CD8-positive, alpha-beta memory T cell (primary cell): ENCODE measurements at regions of chr5 and their contacts with region 1.

Region 1: GRCh38 chr5:14727428-14727865 is 62.9 kb downstream of the OTULIN start:
- DNase-seq: peak; percentile 59 to 77 (median 65)
- H3K4me3 ChIP-seq: no peak overlapping the region
- H3K4me3 Mint-ChIP-seq: no peak overlapping the region
- H3K27ac ChIP-seq: no peak overlapping the region
- H3K27ac Mint-ChIP-seq: peak overlapping the region in 4 of 8 donors; percentile 11 to 77 (median 67)
- H3K4me1 ChIP-seq: no peaks in the 10 kb centered on the region
- H3K4me1 Mint-ChIP-seq: peaks cover 5 to 19% (median 5%) of the 10 kb centered on the region in 3 donors
- H3K27me3 ChIP-seq: no peaks in the 10 kb centered on the region
- H3K27me3 Mint-ChIP-seq: no peaks in the 10 kb centered on the region

Region 2: DNA sequence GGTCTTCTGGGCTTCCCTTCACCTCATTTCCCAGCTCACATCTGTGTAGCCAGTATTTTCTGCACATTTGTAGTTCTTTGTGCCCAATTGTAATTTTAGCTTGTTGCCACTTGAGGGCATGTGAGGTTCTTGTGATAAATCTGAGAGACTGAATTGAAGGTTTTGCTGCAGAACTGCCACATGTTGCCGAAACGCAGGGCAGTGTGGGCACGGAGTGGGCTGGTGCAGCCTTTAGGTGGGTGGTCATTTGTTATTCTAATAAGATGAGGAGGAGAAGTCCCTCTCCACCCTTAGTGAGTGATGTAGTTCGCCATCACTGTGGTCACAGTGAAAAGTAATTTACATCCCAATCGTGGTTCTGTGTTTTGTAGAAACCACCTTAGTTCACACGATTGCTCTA is 41.7 kb before region 1 on chr5:
- CTCF ChIA-PET with region 1: interaction called, 21 read pairs
- POLR2A ChIA-PET with region 1: no interaction called
- DNase-seq: peak in 2 of 5 donors; percentile 35 to 59
- H3K4me3 ChIP-seq: no peak overlapping the region
- H3K4me3 Mint-ChIP-seq: peak overlapping the region in 6 of 7 donors; percentile 43 to 71 (median 61)
- H3K27ac ChIP-seq: no peak overlapping the region
- H3K27ac Mint-ChIP-seq: peak overlapping the region; percentile 26 to 89 (median 58)
- H3K4me1 ChIP-seq: peaks cover 8% of the 10 kb centered on the region
- H3K4me1 Mint-ChIP-seq: peaks cover 13 to 33% (median 19%) of the 10 kb centered on the region in 3 donors
- H3K27me3 ChIP-seq: no peaks in the 10 kb centered on the region
- H3K27me3 Mint-ChIP-seq: no peaks in the 10 kb centered on the region

Region 3: GRCh38 chr5:14706615-14707021 is 20.8 kb before region 1 on chr5:
- CTCF ChIA-PET with region 1: interaction called, 32 read pairs
- POLR2A ChIA-PET with region 1: no interaction called
- DNase-seq: peak in 3 of 5 donors; percentile 10 to 83 (median 65)
- H3K4me3 ChIP-seq: peak overlapping the region; percentile 10
- H3K4me3 Mint-ChIP-seq: peak overlapping the region in 6 of 7 donors; percentile 65 to 84 (median 79)
- H3K27ac ChIP-seq: peak overlapping the region; percentile 36
- H3K27ac Mint-ChIP-seq: peak overlapping the region; percentile 92 to 100 (median 98)
- H3K4me1 ChIP-seq: peaks cover 80% of the 10 kb centered on the region
- H3K4me1 Mint-ChIP-seq: peaks cover 75 to 88% (median 84%) of the 10 kb centered on the region in 3 donors
- H3K27me3 ChIP-seq: no peaks in the 10 kb centered on the region
- H3K27me3 Mint-ChIP-seq: no peaks in the 10 kb centered on the region

Region 4: DNA sequence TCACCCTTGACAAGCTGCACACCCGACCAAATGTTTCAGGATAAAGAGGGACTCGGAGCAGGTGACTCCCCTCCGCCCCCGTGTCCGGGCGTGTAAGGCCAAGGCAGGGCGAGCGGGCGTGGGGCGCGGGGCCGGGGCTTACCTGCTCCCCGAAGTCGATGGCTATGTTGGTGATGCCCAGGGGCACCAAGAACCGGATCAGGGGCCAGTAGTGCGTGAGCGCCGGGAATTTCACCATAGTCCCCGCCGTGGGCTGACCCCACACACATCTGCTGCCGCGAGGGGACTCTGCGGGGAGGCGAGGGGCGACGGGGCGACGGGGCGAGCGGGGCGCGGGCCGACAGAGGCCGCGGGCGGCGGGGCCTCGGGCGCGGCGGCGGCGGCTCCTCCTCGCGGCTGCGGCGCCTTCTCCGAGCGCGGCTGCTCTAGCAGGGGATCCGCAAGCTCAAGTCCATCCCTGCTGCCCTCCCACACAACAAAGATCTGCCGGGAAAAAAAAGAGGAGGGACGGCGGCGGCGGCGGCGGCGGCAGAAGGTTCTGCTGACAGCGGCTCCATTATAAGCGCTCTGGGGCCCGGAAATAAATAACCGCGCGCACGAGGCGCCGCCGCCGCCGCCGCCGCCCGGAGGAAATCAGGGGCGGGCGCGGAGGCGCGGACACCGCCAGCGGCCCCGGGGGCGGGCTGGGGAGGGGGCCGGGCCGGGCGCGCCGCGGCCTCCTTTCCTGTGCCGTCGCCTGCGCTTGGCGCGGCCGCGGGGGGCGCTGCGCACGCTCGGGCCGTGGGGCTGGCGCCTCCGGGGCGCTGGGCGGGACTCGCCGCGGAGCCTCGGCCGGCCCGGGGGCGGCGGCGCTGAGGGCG is 144.0 kb after region 1 on chr5 and contains the start of gene ANKH:
- CTCF ChIA-PET with region 1: interaction called, 13 read pairs
- POLR2A ChIA-PET with region 1: no interaction called
- DNase-seq: peak; percentile 75 to 86 (median 84)
- H3K4me3 ChIP-seq: peak within 1 kb of the TSS; percentile 64
- H3K4me3 Mint-ChIP-seq: peak within 1 kb of the TSS; percentile 93 to 98 (median 96)
- H3K27ac ChIP-seq: peak within 1 kb of the TSS; percentile 65
- H3K27ac Mint-ChIP-seq: peak within 1 kb of the TSS; percentile 92 to 99 (median 96)
- H3K4me1 ChIP-seq: peaks cover 10% of the 10 kb centered on the region
- H3K4me1 Mint-ChIP-seq: peaks cover 28 to 54% (median 43%) of the 10 kb centered on the region in 3 donors
- H3K27me3 ChIP-seq: no peaks in the 10 kb centered on the region
- H3K27me3 Mint-ChIP-seq: no peaks in the 10 kb centered on the region
- total RNA-seq, gene ANKH: 80.0 to 80.5 TPM

Region 5: DNA sequence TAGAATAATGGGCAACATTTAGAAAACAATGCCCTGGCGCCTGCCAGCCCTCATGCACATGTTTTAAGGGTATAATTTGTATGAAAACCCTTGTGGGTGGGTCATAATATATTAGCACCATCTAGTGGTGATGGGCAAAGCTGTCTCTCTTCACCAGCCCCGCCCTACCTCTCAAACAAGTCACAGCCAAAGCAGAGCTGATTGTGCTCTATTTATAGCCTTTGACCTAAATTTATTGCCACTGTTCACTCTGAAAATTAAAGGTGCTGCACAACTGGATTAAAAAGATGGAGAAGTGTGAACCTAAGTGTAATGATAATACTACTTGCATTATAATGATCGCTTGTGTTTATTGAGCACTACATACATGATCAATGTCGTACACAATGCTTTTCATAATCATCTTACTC is 276.1 kb after region 1 on chr5:
- CTCF ChIA-PET with region 1: interaction called, 72 read pairs
- POLR2A ChIA-PET with region 1: no interaction called
- DNase-seq: peak; percentile 36 to 67 (median 57)
- H3K4me3 ChIP-seq: no peak overlapping the region
- H3K4me3 Mint-ChIP-seq: no peak overlapping the region
- H3K27ac ChIP-seq: no peak overlapping the region
- H3K27ac Mint-ChIP-seq: peak overlapping the region in 1 of 8 donors; percentile 22
- H3K4me1 ChIP-seq: no peaks in the 10 kb centered on the region
- H3K4me1 Mint-ChIP-seq: no peaks in the 10 kb centered on the region
- H3K27me3 ChIP-seq: no peaks in the 10 kb centered on the region
- H3K27me3 Mint-ChIP-seq: peaks cover 8 to 37% of the 10 kb centered on the region in 2 donors

Region 6: GRCh38 chr5:15013654-15014463 is 286.4 kb after region 1 on chr5:
- CTCF ChIA-PET with region 1: interaction called, 13 read pairs
- POLR2A ChIA-PET with region 1: no interaction called
- DNase-seq: peak in 2 of 5 donors; percentile 14 to 28
- H3K4me3 ChIP-seq: no peak overlapping the region
- H3K4me3 Mint-ChIP-seq: no peak overlapping the region
- H3K27ac ChIP-seq: no peak overlapping the region
- H3K27ac Mint-ChIP-seq: no peak overlapping the region
- H3K4me1 ChIP-seq: no peaks in the 10 kb centered on the region
- H3K4me1 Mint-ChIP-seq: no peaks in the 10 kb centered on the region
- H3K27me3 ChIP-seq: no peaks in the 10 kb centered on the region
- H3K27me3 Mint-ChIP-seq: peaks cover 0 to 3% of the 10 kb centered on the region in 2 donors